ENCODE measurements at regions of chr19 and their contacts with region 1.

Region 1: GRCh38 chr19:44071824-44072542 is at the start of gene ZNF284:
- DNase-seq: peak; percentile 58 to 93 (median 80)
- ATAC-seq: peak; percentile 99 to 100
- H3K4me3 Mint-ChIP-seq: peak within 1 kb of the TSS; percentile 86 to 95 (median 92)
- H3K27ac Mint-ChIP-seq: peak within 1 kb of the TSS; percentile 60 to 91 (median 82)
- H3K4me1 Mint-ChIP-seq: peaks cover 14 to 37% (median 26%) of the 10 kb centered on the region in 4 donors
- H3K27me3 Mint-ChIP-seq: no peaks in the 10 kb centered on the region
- polyA plus RNA-seq, gene ZNF284: 0.56 to 0.82 (median 0.71) TPM

Region 2: DNA sequence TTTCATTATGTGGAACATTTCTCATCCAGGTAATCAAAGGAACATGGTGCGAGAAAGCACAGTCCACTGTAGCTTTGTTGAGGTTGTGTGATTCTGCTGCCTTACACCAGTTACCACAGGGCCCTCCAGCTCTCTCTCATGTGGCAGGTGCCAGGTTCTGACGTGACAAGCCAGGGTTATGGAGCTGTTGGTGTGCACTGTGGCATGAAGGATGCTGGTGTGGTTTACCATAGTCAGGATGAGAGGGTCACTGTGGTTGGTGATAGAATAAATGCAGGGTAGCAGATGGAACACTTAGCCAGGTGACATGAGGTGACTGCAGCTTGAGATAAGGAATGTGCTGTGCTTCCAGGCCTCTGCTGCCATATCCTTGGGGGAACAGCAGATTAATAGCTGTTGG is 12.8 kb before region 1 on chr19:
- POLR2A ChIA-PET with region 1: no interaction called
- DNase-seq: no peak
- ATAC-seq: no peak
- H3K4me3 Mint-ChIP-seq: no peak overlapping the region
- H3K27ac Mint-ChIP-seq: no peak overlapping the region
- H3K4me1 Mint-ChIP-seq: peaks cover 0 to 5% (median 0%) of the 10 kb centered on the region in 4 donors
- H3K27me3 Mint-ChIP-seq: no peaks in the 10 kb centered on the region

Region 3: DNA sequence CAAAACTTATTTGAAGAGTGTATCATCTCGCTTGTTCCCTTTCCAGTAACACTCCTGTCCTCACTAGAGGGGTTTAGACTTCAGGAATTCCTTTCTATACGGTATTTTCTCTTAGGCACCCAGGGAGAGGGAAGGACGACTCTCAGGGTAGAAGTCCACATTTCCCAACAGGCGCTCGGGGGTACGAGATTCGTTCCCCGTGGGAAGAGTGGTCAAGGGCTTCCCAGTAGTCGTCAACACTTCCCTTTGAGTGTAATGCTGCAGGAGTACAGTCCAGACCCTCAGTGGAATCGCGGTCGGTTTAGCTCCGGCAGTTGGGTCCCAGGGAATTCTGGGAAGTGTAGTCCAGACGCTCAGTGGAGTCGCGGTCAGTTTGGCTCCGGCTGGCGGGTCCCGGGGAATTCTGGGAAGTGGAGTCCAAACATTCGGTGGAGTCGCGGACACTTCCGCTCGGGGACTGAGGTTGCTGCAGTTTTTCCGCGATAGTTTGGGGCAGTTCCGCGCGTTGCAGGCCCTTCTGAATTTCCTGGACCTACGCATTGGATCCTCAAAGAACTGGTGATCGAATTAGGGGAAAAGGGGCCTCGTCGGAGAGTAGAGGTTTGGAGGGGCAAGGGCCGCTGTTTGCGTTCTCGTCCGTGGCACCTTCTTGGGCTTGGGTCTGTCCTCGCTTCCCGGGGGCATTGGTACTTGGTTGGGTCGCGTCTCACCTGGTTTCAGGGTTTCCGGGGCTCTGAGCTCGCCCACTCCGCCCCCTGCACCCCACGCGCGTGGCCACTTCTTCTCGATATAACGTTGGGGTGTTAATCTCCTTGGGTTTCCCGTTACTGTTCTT is 22.2 kb after region 1 on chr19 and contains the start of gene ZNF224:
- POLR2A ChIA-PET with region 1: interaction called, 11 read pairs
- DNase-seq: peak; percentile 59 to 89 (median 76)
- ATAC-seq: peak; percentile 81 to 87
- H3K4me3 Mint-ChIP-seq: peak within 1 kb of the TSS; percentile 84 to 99 (median 98)
- H3K27ac Mint-ChIP-seq: peak within 1 kb of the TSS; percentile 81 to 97 (median 90)
- H3K4me1 Mint-ChIP-seq: peaks cover 9 to 29% (median 26%) of the 10 kb centered on the region in 4 donors
- H3K27me3 Mint-ChIP-seq: no peaks in the 10 kb centered on the region
- polyA plus RNA-seq, gene ZNF224: 6.9 to 9.0 (median 8.2) TPM

Measured in naive thymus-derived CD8-positive, alpha-beta T cell (primary cell).